BJ (cell line): ENCODE measurements at regions of chr7 and their contacts with region 1.

Region 1: GRCh38 chr7:108065610-108066009 is 62.6 kb upstream of the LAMB1 start:
- DNase-seq: no peak
- H3K4me3 ChIP-seq: no peak overlapping the region
- H3K27me3 ChIP-seq: no peaks in the 10 kb centered on the region
- CTCF ChIP-seq: no peak

Region 2: DNA sequence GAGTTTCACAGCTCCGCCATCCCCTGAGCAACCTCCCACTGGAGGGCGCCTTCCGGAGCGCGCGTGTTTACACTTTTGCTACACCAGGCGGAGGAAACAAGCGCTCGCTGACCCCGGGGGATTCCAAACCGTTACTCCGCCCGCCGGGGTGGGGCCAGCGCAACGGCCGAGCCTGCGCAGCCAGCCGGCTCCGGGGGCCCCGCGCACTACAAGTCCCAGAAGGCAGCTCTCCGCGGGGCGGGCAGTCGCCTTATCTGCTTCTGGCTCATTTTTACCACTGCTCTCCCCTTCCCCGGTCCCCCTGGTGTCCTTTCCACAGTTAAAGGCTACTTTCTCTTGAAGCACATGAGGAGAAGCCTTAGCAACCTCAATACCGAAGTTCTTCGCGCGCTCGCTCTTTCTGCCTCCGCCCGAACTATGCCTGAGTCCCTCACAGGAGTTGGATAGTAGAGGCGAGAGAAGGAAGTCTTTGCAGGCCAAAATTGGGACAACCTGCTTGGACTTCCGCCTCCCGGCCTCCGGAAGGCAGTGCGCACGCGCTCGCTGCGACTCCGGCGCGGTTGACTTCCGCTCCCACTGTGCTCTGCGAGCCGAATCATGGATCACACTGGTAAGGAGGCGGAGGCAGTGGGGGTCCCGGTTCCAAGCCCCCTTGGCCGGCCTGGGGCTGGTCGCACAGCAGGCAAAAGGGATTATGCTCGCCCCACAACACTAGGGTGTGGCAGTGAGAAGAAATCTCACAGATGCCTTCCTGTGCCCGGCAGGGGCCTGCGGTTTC is 321.9 kb before region 1 on chr7 and contains the start of gene CBLL1:
- CTCF ChIA-PET with region 1: no interaction called
- POLR2A ChIA-PET with region 1: no interaction called
- DNase-seq: peak; percentile 77
- H3K4me3 ChIP-seq: peak within 1 kb of the TSS; percentile 74
- H3K27me3 ChIP-seq: no peaks in the 10 kb centered on the region
- CTCF ChIP-seq: peak; percentile 82
- polyA plus RNA-seq, gene CBLL1: 12.2 and 13.9 TPM in 2 replicates

Region 3: GRCh38 chr7:107995184-107996071 is 70.2 kb before region 1 on chr7:
- CTCF ChIA-PET with region 1: no interaction called
- POLR2A ChIA-PET with region 1: interaction called, 16 read pairs
- DNase-seq: no peak
- H3K4me3 ChIP-seq: no peak overlapping the region
- H3K27me3 ChIP-seq: no peaks in the 10 kb centered on the region
- CTCF ChIP-seq: no peak

Region 4: DNA sequence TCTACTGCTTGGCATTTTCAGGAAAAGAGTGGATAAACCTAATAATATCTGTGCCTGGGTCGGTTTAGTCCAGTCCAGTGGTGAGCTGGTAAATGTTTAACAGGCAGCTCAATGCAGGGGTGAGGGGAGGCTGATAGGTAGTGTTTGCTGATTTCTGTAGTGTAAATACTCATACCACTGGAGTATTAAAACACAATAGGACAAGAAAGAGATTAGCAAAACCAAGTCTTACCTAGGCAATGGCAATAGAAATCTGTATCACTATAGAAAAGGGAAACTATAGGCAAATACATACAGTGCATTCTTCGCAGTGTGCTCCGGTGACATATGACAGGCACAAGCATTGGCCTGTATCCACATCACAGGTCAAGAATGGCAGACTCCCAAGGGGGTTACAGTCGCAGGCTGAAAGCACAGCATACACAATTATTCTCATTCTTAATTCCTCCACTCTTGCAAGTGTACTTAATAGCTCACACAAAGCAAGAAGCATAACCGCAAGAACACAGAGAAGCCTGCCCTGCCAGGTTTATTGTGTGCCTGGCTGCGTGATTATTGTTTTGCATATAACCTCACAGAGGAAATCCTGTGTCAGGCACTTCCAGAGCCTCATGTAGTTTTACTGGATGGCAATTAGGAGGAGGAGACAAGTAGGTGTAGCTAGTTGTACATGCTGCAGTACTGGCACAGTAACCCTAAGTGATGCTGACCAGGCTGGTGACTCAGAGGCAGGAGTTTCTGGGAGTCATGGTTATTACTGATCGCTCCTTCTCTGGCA is 29.5 kb after region 1 on chr7:
- CTCF ChIA-PET with region 1: no interaction called
- POLR2A ChIA-PET with region 1: no interaction called
- DNase-seq: peak; percentile 72
- H3K4me3 ChIP-seq: no peak overlapping the region
- H3K27me3 ChIP-seq: no peaks in the 10 kb centered on the region
- CTCF ChIP-seq: no peak